HepG2 (cell line): ENCODE measurements at regions of chr4 and their contacts with region 1.

Region 1: DNA sequence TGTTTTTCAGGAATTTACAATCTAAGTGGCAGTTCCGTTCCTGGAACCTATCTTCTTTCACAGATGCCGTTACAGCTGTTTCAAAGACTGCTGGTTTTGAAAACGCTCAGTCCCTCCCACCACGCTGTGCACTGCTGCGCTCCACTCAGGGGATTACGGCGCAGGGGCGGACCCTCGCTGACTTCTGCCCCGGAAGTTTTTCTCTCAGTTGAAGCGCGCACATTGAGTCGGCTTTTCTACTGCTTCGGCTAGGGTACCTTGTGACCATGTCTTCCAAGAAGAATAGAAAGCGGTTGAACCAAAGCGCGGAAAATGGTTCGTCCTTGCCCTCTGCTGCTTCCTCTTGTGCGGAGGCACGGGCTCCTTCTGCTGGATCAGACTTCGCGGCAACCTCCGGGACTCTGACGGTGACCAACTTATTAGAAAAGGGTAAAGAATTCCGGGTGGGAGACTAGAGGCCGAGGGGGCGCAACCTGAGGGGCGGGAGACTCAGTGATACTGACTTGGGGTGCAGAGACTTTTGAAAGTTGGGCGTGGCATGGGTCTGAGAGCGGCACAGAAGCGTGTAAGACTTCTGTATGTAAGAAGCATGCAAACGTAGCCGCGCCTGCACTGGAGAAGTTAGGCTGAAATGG is 597 bp upstream of the NUDT6 start:
- DNase-seq: peak; percentile 75
- ATAC-seq: peak; percentile 97
- H3K4me3 ChIP-seq: peak overlapping the region; percentile 89 to 95 (median 92)
- H3K27ac ChIP-seq: peak overlapping the region; percentile 89
- H3K4me1 ChIP-seq: peaks cover 42% of the 10 kb centered on the region
- H3K27me3 ChIP-seq: no peaks in the 10 kb centered on the region; a peak in 1 of 5 replicates
- CTCF ChIP-seq: no peak
- EP300 ChIP-seq: peak; percentile 17 to 45; a peak in 2 of 4 replicates
- POLR2A ChIP-seq: peak; percentile 45 to 55; a peak in 1 of 4 replicates
- RAD21 ChIP-seq: no peak

Region 2: DNA sequence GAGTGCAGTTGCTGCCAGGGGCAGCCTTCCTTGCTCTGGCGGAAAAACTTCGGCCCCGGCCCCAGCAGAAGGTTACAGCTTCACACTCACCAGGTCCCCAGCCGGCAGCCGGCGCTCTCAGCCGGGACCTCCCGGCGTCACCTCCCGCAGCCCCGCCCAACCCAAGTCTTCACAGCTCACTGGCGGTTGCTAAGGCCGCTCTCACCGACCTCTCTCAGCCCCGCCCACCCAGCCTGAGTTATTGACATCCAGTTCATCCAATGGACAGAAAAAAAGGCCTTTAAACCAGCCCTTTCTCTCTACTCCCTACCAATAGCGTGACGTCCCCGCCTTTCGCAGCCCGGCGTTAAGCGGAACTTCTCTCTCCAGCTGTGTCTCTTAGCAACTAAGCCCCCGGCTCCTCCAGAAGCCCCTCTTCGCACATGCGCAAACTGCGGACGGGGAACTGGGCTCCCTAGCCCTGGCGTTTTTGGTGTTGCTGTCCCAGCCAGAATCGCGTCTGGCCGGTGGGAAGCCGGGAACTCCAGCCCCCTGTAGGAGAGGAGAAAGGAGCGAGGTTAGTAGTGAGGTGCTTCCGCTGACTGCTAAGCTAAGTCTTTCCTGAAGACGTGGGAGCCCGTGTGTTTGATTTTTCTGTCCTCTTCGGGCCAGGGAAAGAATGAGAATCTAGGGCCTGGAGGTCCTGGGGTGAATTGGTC is 190.5 kb before region 1 on chr4 and contains the start of gene BBS12:
- CTCF ChIA-PET with region 1: no interaction called
- POLR2A ChIA-PET with region 1: interaction called, 7 read pairs
- in situ Hi-C with region 1: no loop called
- intact Hi-C with region 1: loop called (anchors 2 kb)
- DNase-seq: peak; percentile 98
- ATAC-seq: peak; percentile 97
- H3K4me3 ChIP-seq: peak within 1 kb of the TSS; percentile 77 to 84 (median 83)
- H3K27ac ChIP-seq: peak within 1 kb of the TSS; percentile 60
- H3K4me1 ChIP-seq: peaks cover 15% of the 10 kb centered on the region
- H3K27me3 ChIP-seq: no peaks in the 10 kb centered on the region; a peak in 1 of 5 replicates
- CTCF ChIP-seq: peak; percentile 80
- EP300 ChIP-seq: 0 out of 4 replicates have a peak, but pooled peaks of 1 of the 2 experiments have one; percentile 17
- POLR2A ChIP-seq: no peak
- RAD21 ChIP-seq: peak; percentile 57; the same call in 1 of the 2 replicates
- total RNA-seq, gene BBS12: 1.7 and 2.1 TPM in 2 replicates

Region 3: GRCh38 chr4:122758033-122758432 is 165.0 kb before region 1 on chr4:
- CTCF ChIA-PET with region 1: no interaction called
- POLR2A ChIA-PET with region 1: no interaction called
- in situ Hi-C with region 1: loop called (anchors 5 kb)
- intact Hi-C with region 1: no loop called
- DNase-seq: no peak
- ATAC-seq: peak; percentile 35; the same call in 1 of the 3 replicates
- H3K4me3 ChIP-seq: peak overlapping the region in 1 of 3 experiments; percentile 27; a peak in 1 of 6 replicates
- H3K27ac ChIP-seq: no peak overlapping the region
- H3K4me1 ChIP-seq: peaks cover 16% of the 10 kb centered on the region
- H3K27me3 ChIP-seq: no peaks in the 10 kb centered on the region
- CTCF ChIP-seq: peak; percentile 61
- EP300 ChIP-seq: no peak
- POLR2A ChIP-seq: no peak
- RAD21 ChIP-seq: 0 out of 2 replicates have a peak, but pooled peaks have one; percentile 23

Region 4: GRCh38 chr4:123096038-123096437 is 173.0 kb after region 1 on chr4:
- CTCF ChIA-PET with region 1: no interaction called
- POLR2A ChIA-PET with region 1: no interaction called
- in situ Hi-C with region 1: no loop called
- intact Hi-C with region 1: loop called (anchors 5 kb)
- DNase-seq: peak; percentile 15
- ATAC-seq: no peak
- H3K4me3 ChIP-seq: no peak overlapping the region
- H3K27ac ChIP-seq: no peak overlapping the region
- H3K4me1 ChIP-seq: no peaks in the 10 kb centered on the region
- H3K27me3 ChIP-seq: no peaks in the 10 kb centered on the region
- CTCF ChIP-seq: peak; percentile 45
- EP300 ChIP-seq: no peak
- POLR2A ChIP-seq: no peak
- RAD21 ChIP-seq: no peak